Transverse colon (tissue), 4 donors: ENCODE measurements at regions of chr7 and their contacts with region 1.

Region 1: GRCh38 chr7:95690367-95690947 is 81.9 kb upstream of the DYNC1I1 start:
- DNase-seq: no peak
- H3K4me3 ChIP-seq: no peak overlapping the region
- H3K27ac ChIP-seq: no peak overlapping the region
- H3K4me1 ChIP-seq: peaks cover 0 to 6% (median 0%) of the 10 kb centered on the region in 4 donors
- H3K27me3 ChIP-seq: peaks cover 15% of the 10 kb centered on the region
- CTCF ChIP-seq: peak; percentile 53 to 79 (median 64)
- EP300 ChIP-seq: no peak
- POLR2A ChIP-seq: no peak

Region 2: DNA sequence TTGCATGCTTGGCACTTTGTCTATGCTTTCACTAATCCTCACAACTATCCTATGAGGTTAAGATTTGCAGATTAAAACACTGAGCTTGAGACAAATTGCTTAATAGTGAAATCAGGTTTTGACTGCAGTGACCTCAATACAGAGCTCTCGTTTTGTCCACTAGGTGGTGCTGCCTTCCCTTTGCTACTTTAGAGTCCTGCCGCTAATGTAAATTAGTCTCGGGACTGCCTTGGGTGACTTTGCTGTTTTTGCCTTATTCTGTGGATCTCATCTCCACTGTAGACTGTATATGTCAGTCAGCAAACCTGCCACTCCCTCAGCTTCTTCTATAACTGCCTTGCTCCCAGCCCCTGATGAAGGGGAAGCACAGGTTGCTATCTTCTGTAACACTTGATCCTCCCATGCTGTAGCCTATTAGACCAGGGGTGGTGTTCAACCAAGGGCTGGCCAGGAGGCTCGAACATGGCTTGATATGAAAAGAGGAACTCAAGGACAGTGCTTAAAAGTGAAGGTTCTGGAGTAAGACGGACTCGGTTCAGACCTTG is 178.7 kb before region 1 on chr7:
- in situ Hi-C with region 1: loop called in 2 of 4 experiments (anchors 5 to 10 kb)
- intact Hi-C with region 1: loop called (anchors 5 kb)
- DNase-seq: peak; percentile 76
- H3K4me3 ChIP-seq: no peak overlapping the region
- H3K27ac ChIP-seq: no peak overlapping the region
- H3K4me1 ChIP-seq: no peaks in the 10 kb centered on the region
- H3K27me3 ChIP-seq: peaks cover 3% of the 10 kb centered on the region
- CTCF ChIP-seq: peak; percentile 79 to 94 (median 89)
- EP300 ChIP-seq: no peak
- POLR2A ChIP-seq: no peak

Region 3: DNA sequence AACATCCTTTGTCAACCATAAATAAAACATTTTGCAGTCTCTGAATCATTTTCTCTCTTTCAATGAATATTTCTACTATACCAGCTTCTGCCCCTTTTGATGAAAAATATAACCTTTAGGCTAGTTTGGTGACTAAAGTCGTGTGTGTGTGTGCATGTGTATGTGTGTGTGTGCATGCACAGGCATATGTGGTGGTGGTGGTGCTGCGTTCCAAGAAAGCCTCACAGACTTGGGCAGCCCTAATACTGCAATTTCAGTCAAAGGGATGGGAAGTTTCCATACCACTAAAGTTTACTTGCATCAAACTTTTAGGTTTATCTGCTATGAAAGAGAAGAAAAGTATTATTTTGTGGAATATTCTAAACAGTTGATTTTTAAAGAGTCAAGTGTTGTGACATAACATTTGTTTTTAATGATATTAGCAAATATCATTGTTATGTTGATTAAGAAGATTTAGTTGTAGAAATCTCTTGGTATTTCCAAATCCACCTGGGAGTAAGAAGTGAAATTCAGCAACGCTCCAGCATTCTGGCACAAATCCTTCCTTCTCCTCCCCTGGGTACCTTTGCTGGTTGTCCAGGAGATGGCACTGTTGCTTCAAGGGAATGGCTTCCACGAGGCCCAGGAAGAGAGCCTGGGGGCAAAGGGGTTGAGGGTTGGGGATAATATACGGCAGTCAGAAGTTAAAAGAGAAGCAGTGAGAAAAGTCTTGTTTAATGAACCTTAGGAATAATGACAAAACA is 163.3 kb before region 1 on chr7:
- in situ Hi-C with region 1: no loop called
- intact Hi-C with region 1: loop called (anchors 1 kb)
- DNase-seq: peak; percentile 48
- H3K4me3 ChIP-seq: no peak overlapping the region
- H3K27ac ChIP-seq: no peak overlapping the region
- H3K4me1 ChIP-seq: peaks cover 0 to 28% (median 18%) of the 10 kb centered on the region in 4 donors
- H3K27me3 ChIP-seq: no peaks in the 10 kb centered on the region
- CTCF ChIP-seq: peak; percentile 83 to 91 (median 90)
- EP300 ChIP-seq: no peak
- POLR2A ChIP-seq: no peak

Region 4: GRCh38 chr7:95596198-95597063 is 94.0 kb before region 1 on chr7 and contains the start of gene PDK4:
- in situ Hi-C with region 1: no loop called
- intact Hi-C with region 1: loop called (anchors 10 kb)
- DNase-seq: peak; percentile 96
- H3K4me3 ChIP-seq: peak within 1 kb of the TSS; percentile 41 to 83 (median 73)
- H3K27ac ChIP-seq: peak within 1 kb of the TSS; percentile 95 to 96 (median 96)
- H3K4me1 ChIP-seq: peaks cover 0 to 17% (median 8%) of the 10 kb centered on the region in 4 donors
- H3K27me3 ChIP-seq: no peaks in the 10 kb centered on the region
- CTCF ChIP-seq: peak in 1 of 5 experiments; percentile 20
- EP300 ChIP-seq: peak; percentile 89
- POLR2A ChIP-seq: peak; percentile 95
- total RNA-seq, gene PDK4: 134 to 510 (median 273) TPM